BJ (cell line): ENCODE measurements at regions of chr6 and their contacts with region 1.

Region 1: DNA sequence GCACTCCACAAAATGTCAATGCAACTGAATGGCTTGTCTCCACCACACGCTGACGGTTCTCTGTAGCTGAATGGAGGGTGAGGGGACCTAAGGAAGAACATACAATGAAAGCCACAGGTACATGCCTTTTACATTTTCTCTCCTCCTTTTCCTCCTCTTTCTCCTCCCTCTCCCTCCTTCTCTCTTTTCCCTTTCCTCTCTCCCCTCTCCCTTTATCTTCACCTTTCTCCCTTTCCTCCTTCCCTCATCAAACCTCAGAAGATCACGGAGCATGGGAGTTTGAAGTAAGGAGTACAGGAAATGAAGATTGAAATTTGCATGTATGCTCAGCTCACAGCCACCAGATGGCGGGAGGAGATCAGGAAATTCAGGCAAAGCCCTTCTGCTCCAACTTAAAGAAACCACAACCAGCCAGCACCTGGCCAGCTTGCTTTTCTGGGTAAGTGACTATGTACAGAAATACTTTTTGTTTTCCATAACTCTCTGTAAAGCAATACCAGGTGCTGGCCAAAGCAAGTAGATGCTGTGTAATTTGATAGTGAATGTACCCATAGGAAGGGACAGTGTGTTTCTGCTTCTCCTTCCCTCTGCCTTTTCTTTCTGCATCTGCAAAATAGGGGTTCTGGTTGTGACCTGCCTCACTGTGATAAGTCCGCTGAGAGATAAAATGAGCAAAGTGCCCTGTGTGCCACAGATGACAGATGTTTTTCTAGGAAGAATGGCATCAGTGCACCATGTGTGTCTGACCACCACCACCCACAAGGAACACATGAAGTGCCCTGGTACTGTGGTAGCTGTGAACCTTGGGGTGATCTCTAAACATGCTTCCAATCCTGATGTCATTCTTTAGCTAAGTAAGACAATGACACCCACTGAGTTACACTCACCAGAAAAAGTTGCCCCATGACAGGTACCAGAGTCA is 18.6 kb upstream of the FOXO3 start:
- DNase-seq: no peak
- H3K4me3 ChIP-seq: no peak overlapping the region
- H3K27me3 ChIP-seq: peaks cover 2% of the 10 kb centered on the region; the same call in 1 of the 2 replicates
- CTCF ChIP-seq: peak; percentile 83

Region 2: GRCh38 chr6:108558372-108559096 is 16.4 kb after region 1 on chr6:
- CTCF ChIA-PET with region 1: interaction called, 28 read pairs
- POLR2A ChIA-PET with region 1: no interaction called
- DNase-seq: peak; percentile 87
- H3K4me3 ChIP-seq: peak overlapping the region; percentile 89
- H3K27me3 ChIP-seq: peaks cover 1% of the 10 kb centered on the region; the same call in 1 of the 2 replicates
- CTCF ChIP-seq: no peak

Region 3: DNA sequence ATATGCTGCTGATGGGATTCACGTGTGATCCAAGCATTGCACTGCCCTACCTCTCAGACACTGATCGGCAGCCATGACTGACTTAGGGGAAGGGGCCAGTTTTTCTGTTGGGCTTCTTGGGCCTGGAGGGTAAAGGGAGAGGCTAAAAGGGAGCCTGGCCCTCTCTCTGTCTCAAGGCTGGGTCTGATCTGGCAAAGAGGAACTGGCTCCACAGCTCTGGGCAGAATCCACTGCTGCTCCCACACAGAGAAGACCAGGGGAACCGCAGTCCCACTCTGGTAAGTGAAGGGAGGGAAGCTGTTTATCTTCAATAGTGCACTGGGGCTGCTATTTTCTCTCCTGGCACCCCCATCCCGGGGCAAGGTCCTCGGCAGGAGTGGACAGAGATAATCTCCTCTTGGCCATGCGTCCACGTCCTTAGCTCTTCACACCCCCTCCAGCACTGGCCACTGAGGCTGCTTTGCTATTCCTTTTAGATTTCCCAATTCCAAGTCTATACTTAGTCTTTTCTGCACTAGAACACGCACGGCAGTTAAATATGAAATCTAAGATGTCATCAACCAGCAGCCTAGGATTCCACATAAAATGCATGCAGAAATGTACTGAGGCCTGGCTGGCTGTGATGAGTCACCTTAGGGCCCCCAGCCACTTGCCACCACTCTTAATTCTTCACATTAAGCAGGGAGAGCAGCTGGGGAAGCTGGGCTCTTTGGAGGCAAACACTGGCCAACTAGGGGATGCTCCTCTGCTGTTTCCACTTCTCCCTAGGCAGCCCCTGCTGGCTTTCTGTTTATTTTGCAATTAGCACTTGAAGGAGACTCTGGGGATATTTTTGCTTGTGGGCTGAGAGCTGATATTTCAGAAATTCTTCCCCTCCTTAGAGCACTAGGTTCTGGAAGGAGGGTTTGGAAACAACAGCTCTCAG is 218.3 kb after region 1 on chr6:
- CTCF ChIA-PET with region 1: no interaction called
- POLR2A ChIA-PET with region 1: no interaction called
- DNase-seq: no peak
- H3K4me3 ChIP-seq: no peak overlapping the region
- H3K27me3 ChIP-seq: peaks cover 1% of the 10 kb centered on the region
- CTCF ChIP-seq: no peak

Region 4: GRCh38 chr6:108782179-108783041 is 240.3 kb after region 1 on chr6:
- CTCF ChIA-PET with region 1: interaction called, 13 read pairs
- POLR2A ChIA-PET with region 1: no interaction called
- DNase-seq: peak; percentile 35
- H3K4me3 ChIP-seq: peak overlapping the region; percentile 27
- H3K27me3 ChIP-seq: no peaks in the 10 kb centered on the region
- CTCF ChIP-seq: peak; percentile 85

Region 5: GRCh38 chr6:108846628-108847027 is 304.5 kb after region 1 on chr6:
- CTCF ChIA-PET with region 1: interaction called, 7 read pairs
- POLR2A ChIA-PET with region 1: interaction called, 10 read pairs
- DNase-seq: no peak
- H3K4me3 ChIP-seq: no peak overlapping the region
- H3K27me3 ChIP-seq: no peaks in the 10 kb centered on the region; the same call in none of the 2 replicates
- CTCF ChIP-seq: no peak

Region 6: GRCh38 chr6:108896111-108896661 is 354.1 kb after region 1 on chr6:
- CTCF ChIA-PET with region 1: interaction called, 96 read pairs
- POLR2A ChIA-PET with region 1: no interaction called
- DNase-seq: peak; percentile 65
- H3K4me3 ChIP-seq: no peak overlapping the region
- H3K27me3 ChIP-seq: no peaks in the 10 kb centered on the region
- CTCF ChIP-seq: no peak

Region 7: DNA sequence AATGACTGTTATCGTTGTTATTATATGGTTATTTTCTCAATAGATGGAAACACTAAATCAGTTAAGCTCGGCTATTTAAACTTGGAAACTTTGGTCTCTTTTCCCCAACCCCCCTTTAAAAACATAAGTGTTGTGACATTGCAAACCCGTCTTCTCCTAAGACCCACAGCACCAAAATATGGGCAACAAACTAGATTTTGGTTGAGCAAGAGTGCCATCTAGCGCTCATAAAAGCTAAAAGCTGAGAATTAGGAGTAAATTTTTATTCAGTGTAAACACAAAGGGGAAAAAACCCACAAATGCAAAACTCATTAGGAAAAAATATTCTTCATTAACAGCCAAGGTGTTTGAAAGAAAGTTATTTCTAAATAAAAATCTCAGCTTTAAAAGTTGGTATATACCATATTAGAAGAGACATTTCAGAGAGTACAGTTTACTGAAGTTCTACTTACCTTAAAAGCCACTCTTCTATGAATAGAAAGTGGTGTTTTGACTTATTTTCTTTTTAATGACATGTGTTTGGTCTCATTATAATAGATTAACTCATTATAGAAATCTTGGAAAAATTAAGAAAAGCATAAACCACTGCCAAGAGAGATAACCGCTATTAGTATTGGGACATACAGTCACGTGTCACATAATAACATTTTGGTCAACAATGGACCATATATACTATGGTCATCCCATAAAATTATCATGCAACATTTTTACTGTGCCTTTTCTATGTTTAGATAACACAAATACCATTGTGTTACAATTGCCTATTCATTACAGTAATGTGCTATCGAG is 531.4 kb after region 1 on chr6:
- CTCF ChIA-PET with region 1: interaction called, 70 read pairs
- POLR2A ChIA-PET with region 1: no interaction called
- DNase-seq: no peak
- H3K4me3 ChIP-seq: no peak overlapping the region
- H3K27me3 ChIP-seq: no peaks in the 10 kb centered on the region
- CTCF ChIP-seq: peak; percentile 62